Caco-2 (cell line): ENCODE measurements at regions of chr3 and their contacts with region 1.

Region 1: DNA sequence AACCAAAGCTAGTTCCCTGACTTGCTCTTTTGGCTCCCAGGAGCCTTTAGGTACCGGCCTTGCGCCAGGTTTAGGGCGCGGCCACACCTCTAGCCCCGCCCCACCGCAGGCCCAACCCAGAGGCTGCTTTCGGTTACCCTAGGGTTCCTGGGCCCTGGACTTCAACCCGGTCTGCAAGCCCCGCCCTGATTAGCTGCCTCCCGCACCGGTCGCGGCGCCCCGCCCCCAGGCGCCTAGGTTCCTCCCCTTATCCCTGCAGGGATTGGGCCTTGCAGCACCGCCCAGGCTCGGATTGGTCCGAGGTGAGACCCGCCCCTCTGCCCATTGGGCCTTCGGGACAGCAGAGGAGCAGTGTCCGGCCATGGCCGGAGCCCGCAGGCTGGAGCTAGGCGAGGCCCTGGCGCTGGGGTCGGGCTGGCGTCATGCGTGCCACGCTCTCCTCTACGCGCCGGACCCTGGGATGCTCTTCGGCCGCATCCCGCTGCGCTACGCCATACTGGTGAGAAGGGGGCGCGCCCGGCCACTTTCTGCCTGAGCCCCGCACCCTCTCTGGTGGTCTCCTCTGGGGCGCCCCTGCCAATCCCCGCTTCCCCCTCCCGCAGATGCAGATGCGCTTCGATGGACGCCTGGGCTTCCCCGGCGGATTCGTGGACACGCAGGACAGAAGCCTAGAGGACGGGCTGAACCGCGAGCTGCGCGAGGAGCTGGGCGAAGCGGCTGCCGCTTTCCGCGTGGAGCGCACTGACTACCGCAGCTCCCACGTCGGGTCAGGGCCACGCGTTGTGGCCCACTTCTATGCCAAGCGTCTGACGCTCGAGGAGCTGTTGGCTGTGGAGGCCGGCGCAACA is at the start of gene NUDT16:
- DNase-seq: peak; percentile 99 to 100
- H3K4me3 ChIP-seq: peak within 1 kb of the TSS; percentile 83
- H3K4me3 Mint-ChIP-seq: peak within 1 kb of the TSS; percentile 75
- H3K27ac Mint-ChIP-seq: peak within 1 kb of the TSS; percentile 76
- H3K4me1 ChIP-seq: 0 out of 2 replicates have a peak, but pooled peaks cover 4% of the 10 kb centered on the region
- H3K4me1 Mint-ChIP-seq: peaks cover 8% of the 10 kb centered on the region
- H3K27me3 ChIP-seq: no peaks in the 10 kb centered on the region
- H3K27me3 Mint-ChIP-seq: no peaks in the 10 kb centered on the region
- CTCF ChIP-seq: no peak
- total RNA-seq, gene NUDT16: 16.6 TPM in 2 replicates

Region 2: DNA sequence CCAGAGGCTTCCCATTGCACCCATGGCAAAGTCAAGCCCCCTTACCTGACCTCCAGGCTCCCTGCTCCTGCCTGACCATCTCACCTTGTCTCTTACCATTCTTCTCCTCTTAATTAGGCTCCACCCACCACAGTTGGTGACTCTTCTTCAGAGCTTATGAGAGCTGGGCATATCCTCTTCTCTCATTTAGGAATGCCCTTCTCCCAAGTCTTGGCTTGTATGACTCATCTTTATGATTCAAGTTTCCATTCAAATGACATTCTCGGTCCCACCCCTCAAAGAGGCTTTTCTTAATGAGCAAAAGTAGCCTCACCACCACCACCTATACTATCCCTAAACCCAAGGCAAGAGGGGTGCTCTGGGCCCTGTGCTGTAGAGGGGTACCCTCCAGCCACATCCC is 55.4 kb before region 1 on chr3:
- CTCF ChIA-PET with region 1: no interaction called
- POLR2A ChIA-PET with region 1: no interaction called
- intact Hi-C with region 1: no loop called
- DNase-seq: no peak
- H3K4me3 ChIP-seq: no peak overlapping the region
- H3K4me3 Mint-ChIP-seq: no peak overlapping the region
- H3K27ac Mint-ChIP-seq: no peak overlapping the region
- H3K4me1 ChIP-seq: no peaks in the 10 kb centered on the region
- H3K4me1 Mint-ChIP-seq: no peaks in the 10 kb centered on the region
- H3K27me3 ChIP-seq: no peaks in the 10 kb centered on the region
- H3K27me3 Mint-ChIP-seq: no peaks in the 10 kb centered on the region
- CTCF ChIP-seq: no peak

Region 3: GRCh38 chr3:131361464-131362421 is 19.9 kb before region 1 on chr3:
- CTCF ChIA-PET with region 1: no interaction called
- POLR2A ChIA-PET with region 1: interaction called, 10 read pairs
- intact Hi-C with region 1: loop called (anchors 1 kb)
- DNase-seq: peak; percentile 95 to 96
- H3K4me3 ChIP-seq: peak overlapping the region; percentile 84
- H3K4me3 Mint-ChIP-seq: peak overlapping the region; percentile 87
- H3K27ac Mint-ChIP-seq: peak overlapping the region; percentile 84
- H3K4me1 ChIP-seq: no peaks in the 10 kb centered on the region
- H3K4me1 Mint-ChIP-seq: peaks cover 7% of the 10 kb centered on the region
- H3K27me3 ChIP-seq: no peaks in the 10 kb centered on the region
- H3K27me3 Mint-ChIP-seq: no peaks in the 10 kb centered on the region
- CTCF ChIP-seq: no peak

Region 4: GRCh38 chr3:131494706-131495105 is 113.0 kb after region 1 on chr3:
- CTCF ChIA-PET with region 1: no interaction called
- POLR2A ChIA-PET with region 1: no interaction called
- intact Hi-C with region 1: loop called (anchors 5 kb)
- DNase-seq: no peak
- H3K4me3 ChIP-seq: no peak overlapping the region
- H3K4me3 Mint-ChIP-seq: no peak overlapping the region
- H3K27ac Mint-ChIP-seq: no peak overlapping the region
- H3K4me1 ChIP-seq: no peaks in the 10 kb centered on the region
- H3K4me1 Mint-ChIP-seq: no peaks in the 10 kb centered on the region
- H3K27me3 ChIP-seq: no peaks in the 10 kb centered on the region
- H3K27me3 Mint-ChIP-seq: no peaks in the 10 kb centered on the region
- CTCF ChIP-seq: no peak

Region 5: GRCh38 chr3:131669590-131669989 is 287.9 kb after region 1 on chr3:
- CTCF ChIA-PET with region 1: no interaction called
- POLR2A ChIA-PET with region 1: no interaction called
- intact Hi-C with region 1: no loop called
- DNase-seq: no peak
- H3K4me3 ChIP-seq: no peak overlapping the region
- H3K4me3 Mint-ChIP-seq: no peak overlapping the region
- H3K27ac Mint-ChIP-seq: no peak overlapping the region
- H3K4me1 ChIP-seq: no peaks in the 10 kb centered on the region
- H3K4me1 Mint-ChIP-seq: no peaks in the 10 kb centered on the region
- H3K27me3 ChIP-seq: no peaks in the 10 kb centered on the region
- H3K27me3 Mint-ChIP-seq: peaks cover 10% of the 10 kb centered on the region
- CTCF ChIP-seq: no peak